ENCODE measurements at regions of chr9 and their contacts with region 1.

Region 1: GRCh38 chr9:19631181-19631580 is 157.7 kb downstream of the SLC24A2 start:
- DNase-seq: no peak
- ATAC-seq: no peak
- H3K4me3 ChIP-seq: no peak overlapping the region
- H3K27ac ChIP-seq: no peak overlapping the region
- H3K4me1 ChIP-seq: no peaks in the 10 kb centered on the region
- H3K27me3 ChIP-seq: no peaks in the 10 kb centered on the region

Region 2: GRCh38 chr9:17930071-17930470 is 1701.1 kb before region 1 on chr9:
- intact Hi-C with region 1: loop called in 1 of 2 experiments (anchors 5 kb)
- DNase-seq: no peak
- ATAC-seq: no peak
- H3K4me3 ChIP-seq: no peak overlapping the region
- H3K27ac ChIP-seq: no peak overlapping the region
- H3K4me1 ChIP-seq: no peaks in the 10 kb centered on the region
- H3K27me3 ChIP-seq: no peaks in the 10 kb centered on the region

Region 3: GRCh38 chr9:19408693-19409400 is 222.3 kb before region 1 on chr9 and contains the start of gene ACER2:
- intact Hi-C with region 1: no loop called
- DNase-seq: peak; percentile 96 to 99
- ATAC-seq: peak; percentile 98
- H3K4me3 ChIP-seq: peak within 1 kb of the TSS; percentile 37 to 74
- H3K27ac ChIP-seq: peak within 1 kb of the TSS in 1 of 2 donors; percentile 41
- H3K4me1 ChIP-seq: peaks cover 0 to 2% of the 10 kb centered on the region in 2 donors
- H3K27me3 ChIP-seq: no peaks in the 10 kb centered on the region
- total RNA-seq, gene ACER2: 4.9 to 11.2 TPM